Activated CD4-positive, alpha-beta memory T cell treated with anti-CD3 and anti-CD28 coated beads for 36 hours (primary cell): ENCODE measurements at regions of chr3 and their contacts with region 1.

Region 1: GRCh38 chr3:106215047-106215446 is 346.2 kb upstream of the CBLB start:
- DNase-seq: peak; percentile 64
- H3K4me3 Mint-ChIP-seq: no peak overlapping the region
- H3K27ac Mint-ChIP-seq: peak overlapping the region; percentile 68
- H3K4me1 Mint-ChIP-seq: peaks cover 61% of the 10 kb centered on the region
- H3K27me3 Mint-ChIP-seq: no peaks in the 10 kb centered on the region

Region 2: DNA sequence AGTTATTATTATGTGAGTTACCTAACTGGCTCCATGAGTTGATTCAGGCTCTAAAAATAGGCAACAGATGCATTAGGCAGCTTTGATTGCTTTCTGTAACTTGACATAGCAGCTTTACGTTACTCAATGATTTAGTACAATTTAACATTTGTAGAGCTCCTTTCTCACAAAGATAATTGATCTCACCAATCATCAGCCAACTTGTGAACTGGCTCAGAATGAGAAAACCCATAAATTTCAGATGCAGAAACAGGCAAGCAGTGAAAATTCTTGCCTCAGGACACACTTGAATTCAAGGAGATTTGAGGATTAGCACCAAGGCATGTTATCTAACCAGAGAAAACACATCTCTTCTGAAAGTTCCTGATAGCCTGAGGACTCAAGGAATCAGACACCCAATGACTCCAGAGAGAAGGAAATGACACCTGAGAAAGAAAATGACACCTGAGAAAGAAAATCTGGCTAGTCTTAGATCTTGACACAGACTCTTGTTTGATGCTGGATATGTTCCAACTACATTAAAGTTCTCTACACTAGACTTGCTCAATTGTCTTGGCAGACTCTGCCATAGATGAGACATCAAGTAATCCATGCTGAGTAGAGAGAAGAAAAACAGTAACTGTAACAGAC is 31.2 kb before region 1 on chr3:
- CTCF ChIA-PET with region 1: no interaction called
- POLR2A ChIA-PET with region 1: no interaction called
- intact Hi-C with region 1: loop called (anchors 1 kb)
- DNase-seq: no peak
- H3K4me3 Mint-ChIP-seq: no peak overlapping the region
- H3K27ac Mint-ChIP-seq: no peak overlapping the region
- H3K4me1 Mint-ChIP-seq: peaks cover 40% of the 10 kb centered on the region
- H3K27me3 Mint-ChIP-seq: no peaks in the 10 kb centered on the region

Region 3: GRCh38 chr3:106232956-106233355 is 17.9 kb after region 1 on chr3:
- CTCF ChIA-PET with region 1: no interaction called
- POLR2A ChIA-PET with region 1: interaction called, 3 read pairs
- intact Hi-C with region 1: loop called (anchors 2 kb)
- DNase-seq: no peak
- H3K4me3 Mint-ChIP-seq: no peak overlapping the region
- H3K27ac Mint-ChIP-seq: no peak overlapping the region
- H3K4me1 Mint-ChIP-seq: peaks cover 42% of the 10 kb centered on the region
- H3K27me3 Mint-ChIP-seq: no peaks in the 10 kb centered on the region

Region 4: DNA sequence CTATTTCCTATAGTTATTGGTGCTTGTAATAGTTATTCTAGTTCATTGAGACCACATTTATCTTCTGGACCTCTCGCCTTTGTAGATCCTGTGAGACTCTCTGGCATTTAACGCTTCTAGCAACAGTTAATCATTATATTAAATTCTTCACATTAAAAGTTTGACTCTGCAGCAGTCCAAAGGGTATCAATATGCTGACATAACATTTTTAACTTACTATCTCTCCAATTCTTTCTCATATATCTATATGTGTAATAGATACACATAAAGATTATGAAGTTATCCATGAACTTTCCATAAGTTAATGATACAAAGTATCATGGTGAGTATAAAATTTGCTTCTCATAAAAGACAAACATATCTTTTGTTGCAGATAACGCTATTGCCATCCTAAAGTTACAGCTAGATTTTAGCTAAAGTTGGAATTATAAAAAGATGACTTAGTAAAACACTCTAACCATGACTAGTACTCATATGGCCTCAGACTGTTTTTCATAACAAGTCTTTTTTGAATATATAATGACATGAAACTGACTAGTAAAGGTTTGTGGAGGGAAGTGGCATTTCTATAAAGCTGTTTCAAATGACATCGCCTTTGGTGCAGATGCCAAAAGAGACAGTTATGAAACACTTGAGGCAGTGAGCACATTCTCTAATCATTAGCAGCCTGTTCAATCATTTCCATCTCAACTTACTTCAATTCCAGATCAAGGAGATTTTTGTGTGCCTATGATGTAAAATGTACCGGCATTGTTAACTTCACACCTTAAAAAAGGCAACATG is 33.0 kb after region 1 on chr3:
- CTCF ChIA-PET with region 1: interaction called, 3 read pairs
- POLR2A ChIA-PET with region 1: no interaction called
- intact Hi-C with region 1: loop called (anchors 2 kb)
- DNase-seq: no peak
- H3K4me3 Mint-ChIP-seq: no peak overlapping the region
- H3K27ac Mint-ChIP-seq: no peak overlapping the region
- H3K4me1 Mint-ChIP-seq: peaks cover 11% of the 10 kb centered on the region
- H3K27me3 Mint-ChIP-seq: no peaks in the 10 kb centered on the region

Region 5: GRCh38 chr3:106534206-106534605 is 319.2 kb after region 1 on chr3:
- CTCF ChIA-PET with region 1: no interaction called
- POLR2A ChIA-PET with region 1: no interaction called
- intact Hi-C with region 1: no loop called
- DNase-seq: peak; percentile 81
- H3K4me3 Mint-ChIP-seq: peak overlapping the region; percentile 7
- H3K27ac Mint-ChIP-seq: peak overlapping the region; percentile 80
- H3K4me1 Mint-ChIP-seq: peaks cover 27% of the 10 kb centered on the region
- H3K27me3 Mint-ChIP-seq: no peaks in the 10 kb centered on the region